A673 (cell line): ENCODE measurements at regions of chr6 and their contacts with region 1.

Region 1: DNA sequence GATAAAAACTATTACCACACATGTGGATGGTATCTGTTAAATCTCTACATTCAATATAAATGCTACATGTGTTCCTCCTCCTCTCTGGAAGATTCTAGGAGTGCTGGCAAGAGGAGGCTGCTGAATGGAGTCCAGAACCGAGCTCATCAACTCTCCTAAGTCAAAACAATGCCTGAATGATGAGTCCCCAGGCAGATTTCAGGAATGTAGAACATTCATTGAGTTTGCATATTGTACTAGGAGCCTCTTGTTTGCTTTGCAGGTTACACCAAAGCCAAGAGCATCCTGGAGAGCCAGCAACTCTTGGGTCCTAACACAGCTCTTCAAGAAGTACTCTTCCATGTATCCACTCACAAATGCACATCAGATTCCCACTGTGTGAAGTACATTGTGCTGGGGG is 117.6 kb upstream of the UST start:
- DNase-seq: no peak
- H3K4me3 ChIP-seq: no peak overlapping the region
- H3K27ac ChIP-seq: no peak overlapping the region
- H3K4me1 ChIP-seq: no peaks in the 10 kb centered on the region
- H3K27me3 ChIP-seq: peaks cover 3% of the 10 kb centered on the region
- CTCF ChIP-seq: no peak

Region 2: DNA sequence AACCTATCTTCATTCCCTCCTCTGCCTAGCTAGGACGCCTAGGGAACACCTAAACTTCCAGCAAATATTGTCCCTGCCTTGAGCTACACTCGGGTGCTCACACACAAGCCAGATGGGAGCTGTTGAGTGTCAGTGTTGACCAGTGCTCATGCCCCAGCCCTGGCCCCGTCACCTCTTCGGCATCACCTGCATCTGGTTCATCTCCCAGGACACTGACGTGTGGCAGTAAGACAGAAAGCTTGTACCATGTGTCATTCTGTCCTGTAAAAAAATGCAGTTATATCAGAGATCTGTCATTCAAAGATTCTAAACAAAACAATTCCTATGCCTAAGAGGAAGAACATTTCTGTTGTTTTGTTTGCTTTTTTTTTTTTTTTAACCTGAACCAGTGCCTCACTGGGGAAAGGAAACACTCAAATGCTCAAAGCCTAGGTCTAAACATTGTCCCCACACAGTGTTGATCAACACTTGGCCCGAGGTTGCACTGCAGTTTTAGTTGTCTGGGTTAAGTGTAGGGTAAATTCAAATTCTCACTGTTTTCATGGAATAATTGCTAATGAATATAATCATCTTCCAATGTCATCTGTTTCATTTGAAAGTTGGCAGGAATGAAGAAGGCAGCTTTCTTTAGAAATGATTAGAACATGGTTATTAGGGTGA is 389.2 kb before region 1 on chr6:
- CTCF ChIA-PET with region 1: no interaction called
- POLR2A ChIA-PET with region 1: interaction called, 13 read pairs
- intact Hi-C with region 1: no loop called
- DNase-seq: no peak
- H3K4me3 ChIP-seq: no peak overlapping the region
- H3K27ac ChIP-seq: no peak overlapping the region
- H3K4me1 ChIP-seq: no peaks in the 10 kb centered on the region
- H3K27me3 ChIP-seq: no peaks in the 10 kb centered on the region
- CTCF ChIP-seq: no peak

Region 3: GRCh38 chr6:148947621-148948444 is 318.7 kb after region 1 on chr6:
- CTCF ChIA-PET with region 1: no interaction called
- POLR2A ChIA-PET with region 1: no interaction called
- intact Hi-C with region 1: no loop called
- DNase-seq: peak; percentile 78
- H3K4me3 ChIP-seq: no peak overlapping the region
- H3K27ac ChIP-seq: no peak overlapping the region
- H3K4me1 ChIP-seq: no peaks in the 10 kb centered on the region
- H3K27me3 ChIP-seq: no peaks in the 10 kb centered on the region
- CTCF ChIP-seq: peak; percentile 86